WTC11 (cell line): ENCODE measurements at regions of chr1 and their contacts with region 1.

Region 1: DNA sequence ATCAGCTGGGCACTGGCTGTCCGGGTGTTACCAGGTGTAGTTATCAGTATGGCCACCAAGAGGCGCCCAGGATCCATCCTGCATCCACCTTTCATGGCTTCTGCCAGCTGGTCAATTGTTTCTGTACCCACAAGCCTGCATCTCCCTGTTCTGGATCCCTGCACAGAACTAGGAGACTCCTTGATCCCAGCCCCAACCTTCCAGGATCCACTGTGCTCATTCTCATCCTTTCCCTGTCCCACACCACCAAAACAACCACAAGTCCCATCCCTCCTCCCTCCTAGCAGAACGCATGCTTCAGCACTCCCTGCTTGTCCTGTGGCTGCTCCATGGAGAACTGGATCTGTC is 27.2 kb upstream of the FOXE3 start:
- DNase-seq: peak; percentile 79
- ATAC-seq: peak; percentile 96
- H3K4me3 Mint-ChIP-seq: no peak overlapping the region
- H3K27ac Mint-ChIP-seq: no peak overlapping the region
- H3K4me1 Mint-ChIP-seq: no peaks in the 10 kb centered on the region
- H3K27me3 Mint-ChIP-seq: peaks cover 25% of the 10 kb centered on the region
- CTCF ChIP-seq: peak; percentile 77

Region 2: GRCh38 chr1:47031108-47031457 is 357.8 kb before region 1 on chr1:
- CTCF ChIA-PET with region 1: no interaction called
- POLR2A ChIA-PET with region 1: no interaction called
- DNase-seq: no peak
- ATAC-seq: no peak
- H3K4me3 Mint-ChIP-seq: no peak overlapping the region
- H3K27ac Mint-ChIP-seq: no peak overlapping the region
- H3K4me1 Mint-ChIP-seq: no peaks in the 10 kb centered on the region; the same call in none of the 2 replicates
- H3K27me3 Mint-ChIP-seq: peaks cover 14% of the 10 kb centered on the region
- CTCF ChIP-seq: no peak

Region 3: GRCh38 chr1:47399138-47399845 is 10.4 kb after region 1 on chr1:
- CTCF ChIA-PET with region 1: interaction called, 24 read pairs
- POLR2A ChIA-PET with region 1: no interaction called
- DNase-seq: no peak
- ATAC-seq: no peak
- H3K4me3 Mint-ChIP-seq: no peak overlapping the region
- H3K27ac Mint-ChIP-seq: no peak overlapping the region
- H3K4me1 Mint-ChIP-seq: no peaks in the 10 kb centered on the region
- H3K27me3 Mint-ChIP-seq: peaks cover 55% of the 10 kb centered on the region
- CTCF ChIP-seq: no peak

Region 4: DNA sequence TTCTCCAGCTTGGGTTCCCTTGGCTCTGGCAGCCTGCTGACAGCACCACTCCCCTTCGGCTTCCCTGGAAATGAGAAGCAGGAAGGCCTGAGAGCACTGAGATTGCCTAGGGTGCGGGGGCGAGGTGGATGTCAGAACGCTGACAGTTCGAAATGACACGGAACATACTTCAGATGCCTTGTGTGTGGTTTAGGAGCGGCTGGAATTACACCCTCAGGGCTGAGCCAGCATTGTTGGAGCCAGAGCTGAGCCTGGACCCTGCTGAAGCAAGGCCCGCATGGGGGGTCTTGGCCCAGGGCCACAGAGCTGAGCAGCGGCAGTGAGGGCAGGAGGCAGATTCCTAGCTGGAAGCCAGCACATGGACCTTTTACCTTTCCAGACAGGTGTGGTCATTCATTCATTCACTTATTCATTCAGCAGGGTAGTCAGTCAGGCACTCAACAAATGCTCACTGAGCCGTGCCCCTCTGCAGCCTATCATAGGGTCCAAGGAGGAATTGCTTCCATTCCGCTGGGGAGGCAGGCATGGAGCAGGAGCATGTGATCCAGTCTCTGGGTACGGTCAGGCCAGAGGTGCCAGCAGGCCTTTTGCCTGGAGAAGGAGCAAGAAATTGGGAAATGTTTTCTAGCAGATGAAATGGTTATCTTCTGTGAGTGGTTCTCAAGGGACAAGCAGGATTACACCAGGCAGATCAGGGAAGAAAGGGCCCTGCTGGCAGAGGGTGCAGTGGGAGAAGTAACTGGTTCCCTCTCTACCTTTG is 20.6 kb after region 1 on chr1:
- CTCF ChIA-PET with region 1: interaction called, 16 read pairs
- POLR2A ChIA-PET with region 1: no interaction called
- DNase-seq: no peak
- ATAC-seq: no peak
- H3K4me3 Mint-ChIP-seq: no peak overlapping the region
- H3K27ac Mint-ChIP-seq: no peak overlapping the region
- H3K4me1 Mint-ChIP-seq: no peaks in the 10 kb centered on the region
- H3K27me3 Mint-ChIP-seq: peaks cover 52% of the 10 kb centered on the region
- CTCF ChIP-seq: no peak

Region 5: GRCh38 chr1:47416319-47417169 is 27.7 kb after region 1 on chr1:
- CTCF ChIA-PET with region 1: interaction called, 18 read pairs
- POLR2A ChIA-PET with region 1: interaction called, 3 read pairs
- DNase-seq: no peak
- ATAC-seq: peak; percentile 46
- H3K4me3 Mint-ChIP-seq: peak overlapping the region; percentile 68
- H3K27ac Mint-ChIP-seq: no peak overlapping the region
- H3K4me1 Mint-ChIP-seq: peaks cover 8% of the 10 kb centered on the region
- H3K27me3 Mint-ChIP-seq: peaks cover 83% of the 10 kb centered on the region
- CTCF ChIP-seq: no peak

Region 6: DNA sequence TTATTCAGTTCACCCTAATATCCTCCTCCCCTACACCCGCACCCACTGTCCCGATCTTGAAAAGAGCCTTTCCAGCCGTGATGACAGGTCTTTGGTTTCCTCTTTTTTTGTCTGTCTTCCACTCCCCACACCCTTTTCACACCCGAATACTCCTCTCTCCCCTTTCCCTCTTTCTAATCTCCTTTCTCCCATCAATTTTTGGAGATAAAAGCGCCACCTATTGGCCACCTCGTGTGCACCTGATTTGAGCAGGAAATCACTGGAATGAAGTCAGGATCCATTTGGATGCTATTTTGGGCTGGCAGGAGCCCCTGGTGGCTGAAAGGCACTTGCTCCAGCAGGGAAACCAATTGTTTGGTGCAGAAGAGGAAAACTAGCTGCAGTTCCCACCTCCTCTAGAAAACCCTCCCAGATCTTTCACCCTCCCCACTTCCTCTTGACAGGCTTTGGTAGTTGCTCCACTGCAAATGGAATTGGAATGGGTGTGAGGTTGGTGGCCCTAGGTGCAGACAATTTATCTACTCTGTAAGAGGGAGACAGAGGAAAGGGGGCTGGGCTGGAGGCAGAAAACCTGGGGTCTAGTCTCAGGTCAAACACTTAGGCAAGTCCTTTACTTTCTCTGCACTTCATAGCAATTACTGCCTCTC is 35.6 kb after region 1 on chr1:
- CTCF ChIA-PET with region 1: interaction called, 56 read pairs
- POLR2A ChIA-PET with region 1: no interaction called
- DNase-seq: peak; percentile 75
- ATAC-seq: peak; percentile 97
- H3K4me3 Mint-ChIP-seq: no peak overlapping the region
- H3K27ac Mint-ChIP-seq: no peak overlapping the region
- H3K4me1 Mint-ChIP-seq: peaks cover 11% of the 10 kb centered on the region
- H3K27me3 Mint-ChIP-seq: peaks cover 93% of the 10 kb centered on the region
- CTCF ChIP-seq: peak; percentile 65

Region 7: GRCh38 chr1:47710329-47711071 is 321.6 kb after region 1 on chr1:
- CTCF ChIA-PET with region 1: interaction called, 11 read pairs
- POLR2A ChIA-PET with region 1: no interaction called
- DNase-seq: peak; percentile 86
- ATAC-seq: peak; percentile 56
- H3K4me3 Mint-ChIP-seq: peak overlapping the region; percentile 64
- H3K27ac Mint-ChIP-seq: no peak overlapping the region
- H3K4me1 Mint-ChIP-seq: peaks cover 29% of the 10 kb centered on the region
- H3K27me3 Mint-ChIP-seq: peaks cover 99% of the 10 kb centered on the region
- CTCF ChIP-seq: peak; percentile 97